ENCODE measurements at regions of chr10 and their contacts with region 1.

Region 1: DNA sequence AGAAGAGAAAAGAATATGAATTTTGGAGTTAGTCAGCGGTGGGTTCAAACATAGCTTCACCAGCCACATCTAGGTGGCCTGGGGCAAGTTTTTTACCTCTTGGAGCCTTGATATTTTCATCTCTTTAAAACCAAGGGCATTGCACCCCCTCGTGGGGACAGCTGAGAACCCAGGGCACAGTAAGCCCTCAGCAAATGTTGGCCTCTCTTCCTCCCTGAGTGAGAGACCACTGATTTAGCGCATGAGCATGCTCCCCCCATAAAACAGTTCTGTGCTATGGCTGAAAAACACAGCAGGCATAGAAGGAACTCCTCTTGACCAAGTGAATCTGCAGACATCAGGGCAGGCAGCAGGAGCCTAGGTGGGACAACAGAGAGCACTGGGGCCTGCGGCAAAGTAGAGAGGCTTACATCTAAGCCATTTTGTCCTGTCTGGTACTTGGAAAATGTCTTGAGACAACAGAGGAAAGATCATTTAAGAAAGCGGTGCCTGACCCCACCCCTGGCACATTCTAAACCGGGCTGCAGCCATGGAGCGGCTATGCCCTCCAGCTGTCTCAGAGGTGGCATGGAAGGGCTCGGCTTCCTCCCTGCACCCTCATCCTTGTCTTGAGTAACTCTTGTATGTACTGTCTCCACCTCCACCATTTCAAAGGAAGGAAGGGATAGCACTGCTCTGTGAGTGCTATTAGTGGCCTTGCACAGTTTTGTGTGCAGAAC is 94.7 kb downstream of the ARHGAP22 start:
- DNase-seq: peak; percentile 66
- CTCF ChIP-seq: peak; percentile 29

Region 2: DNA sequence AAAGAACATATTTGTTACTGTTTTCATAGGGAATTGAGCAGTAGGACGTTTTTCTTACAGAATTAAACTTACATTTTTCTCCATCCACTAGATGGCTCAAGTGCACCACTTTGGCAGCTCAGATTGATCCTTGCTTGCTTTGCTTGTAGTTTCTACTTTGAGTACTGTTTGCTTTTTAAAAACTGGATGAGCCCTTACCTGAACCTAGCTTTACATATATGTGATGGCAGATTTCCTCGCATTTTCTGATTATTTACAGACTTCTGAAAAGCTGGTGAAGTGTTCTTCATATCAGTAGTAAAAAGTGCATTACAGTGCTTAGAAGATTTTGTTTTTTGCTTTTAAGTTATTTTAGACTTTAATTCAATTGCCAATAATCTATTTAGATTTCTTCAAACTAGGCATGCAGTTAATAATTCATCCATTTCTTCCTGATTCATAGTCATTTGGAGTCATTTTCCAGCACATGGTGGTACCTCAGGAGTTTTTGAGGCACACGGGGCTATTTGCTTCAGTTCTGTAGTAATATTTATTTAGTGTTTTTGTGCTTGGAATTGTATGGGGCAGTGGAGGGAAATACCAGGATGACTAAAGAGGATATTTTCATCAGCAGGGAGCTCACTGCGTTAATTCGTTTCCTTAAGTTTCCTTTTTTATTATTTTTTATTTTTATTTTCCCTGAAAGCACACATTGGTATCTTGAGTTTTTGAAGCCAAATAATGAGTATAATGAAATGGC is 146.3 kb before region 1 on chr10:
- in situ Hi-C with region 1: loop called (anchors 10 kb)
- DNase-seq: peak; percentile 35
- CTCF ChIP-seq: peak; percentile 52